Gastrocnemius medialis (tissue), 4 donors: ENCODE measurements at regions of chr10 and their contacts with region 1.

Region 1: GRCh38 chr10:71569775-71570588 is 149.6 kb downstream of the C10orf105 start:
- DNase-seq: peak; percentile 45 to 56
- ATAC-seq: peak; percentile 61 to 73
- H3K4me3 ChIP-seq: no peak overlapping the region
- H3K27ac ChIP-seq: no peak overlapping the region
- H3K4me1 ChIP-seq: peaks cover 0 to 1% of the 10 kb centered on the region in 2 donors
- H3K27me3 ChIP-seq: no peaks in the 10 kb centered on the region
- CTCF ChIP-seq: peak; percentile 75 to 89 (median 82)
- POLR2A ChIP-seq: no peak

Region 2: DNA sequence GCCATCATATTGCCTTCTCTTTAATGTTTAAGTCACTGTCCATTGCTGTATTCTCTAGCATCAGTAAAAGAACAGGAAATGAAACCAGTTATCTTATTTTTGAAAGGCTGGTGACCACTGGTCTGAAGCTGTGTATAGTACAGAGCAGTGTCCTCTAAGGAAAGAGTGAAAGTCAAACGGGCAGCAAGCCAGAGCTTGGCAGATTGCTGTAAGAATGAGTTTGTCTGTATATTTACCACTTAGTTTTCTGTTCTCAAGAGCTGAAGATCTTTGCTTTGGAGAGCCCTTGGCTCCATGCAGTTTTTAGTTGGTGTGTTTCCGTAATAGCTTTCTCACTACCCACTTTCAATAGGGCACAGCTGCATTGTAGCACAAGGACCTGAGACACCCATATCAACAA is 713.5 kb before region 1 on chr10:
- in situ Hi-C with region 1: no loop called
- intact Hi-C with region 1: no loop called
- DNase-seq: no peak
- ATAC-seq: no peak
- H3K4me3 ChIP-seq: no peak overlapping the region
- H3K27ac ChIP-seq: no peak overlapping the region
- H3K4me1 ChIP-seq: no peaks in the 10 kb centered on the region
- H3K27me3 ChIP-seq: no peaks in the 10 kb centered on the region
- CTCF ChIP-seq: no peak
- POLR2A ChIP-seq: no peak

Region 3: GRCh38 chr10:71314028-71314693 is 255.8 kb before region 1 on chr10:
- in situ Hi-C with region 1: loop called (anchors 5 to 25 kb)
- intact Hi-C with region 1: loop called (anchors 1 kb)
- DNase-seq: peak in 1 of 2 donors; percentile 35
- ATAC-seq: peak; percentile 54 to 62
- H3K4me3 ChIP-seq: peak overlapping the region in 1 of 4 donors; percentile 25
- H3K27ac ChIP-seq: peak overlapping the region in 2 of 4 donors; percentile 18 to 59
- H3K4me1 ChIP-seq: peaks cover 11% of the 10 kb centered on the region in 2 donors
- H3K27me3 ChIP-seq: no peaks in the 10 kb centered on the region
- CTCF ChIP-seq: peak; percentile 39 to 96 (median 83)
- POLR2A ChIP-seq: no peak

Region 4: DNA sequence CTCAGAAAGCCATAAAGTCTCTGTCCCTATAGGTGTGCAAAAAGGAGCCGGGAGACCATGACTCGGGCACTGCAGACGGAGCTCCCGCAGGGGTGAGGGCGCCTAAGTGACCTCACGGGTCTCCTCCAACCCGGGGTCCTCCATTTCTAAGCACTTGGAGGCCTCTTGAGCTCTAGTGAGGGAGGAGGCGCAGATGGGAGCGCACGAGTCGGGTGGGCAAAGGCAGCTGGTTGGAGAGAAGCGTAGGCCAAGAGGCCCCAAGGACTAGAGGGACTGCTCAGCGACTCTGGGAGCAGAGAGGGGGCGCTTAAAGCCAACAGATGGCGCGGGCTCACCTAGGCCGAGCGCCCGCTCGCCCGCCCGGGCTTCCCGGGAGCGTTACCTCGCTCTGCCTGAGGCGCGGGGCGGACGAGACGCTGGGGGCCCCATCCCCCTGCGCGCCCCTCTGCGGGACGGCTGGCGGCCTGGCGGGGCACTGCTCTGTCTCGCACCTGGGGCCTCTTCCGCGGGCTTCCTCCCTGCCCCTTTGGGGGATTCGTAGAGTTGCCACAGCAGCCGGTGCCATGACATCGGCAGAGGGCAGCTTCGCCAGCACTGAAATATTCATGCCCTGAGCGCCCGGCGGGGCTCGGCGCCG is 173.8 kb before region 1 on chr10:
- in situ Hi-C with region 1: loop called in 2 of 4 experiments (anchors 5 to 10 kb)
- intact Hi-C with region 1: loop called (anchors 1 kb)
- DNase-seq: peak; percentile 36 to 43
- ATAC-seq: peak; percentile 71 to 76
- H3K4me3 ChIP-seq: peak overlapping the region; percentile 45 to 69 (median 57)
- H3K27ac ChIP-seq: peak overlapping the region in 1 of 4 donors; percentile 40
- H3K4me1 ChIP-seq: peaks cover 7 to 10% of the 10 kb centered on the region in 2 donors
- H3K27me3 ChIP-seq: peaks cover 23 to 41% (median 38%) of the 10 kb centered on the region in 3 donors
- CTCF ChIP-seq: peak; percentile 52 to 70 (median 55)
- POLR2A ChIP-seq: no peak

Region 5: GRCh38 chr10:71404503-71405295 is 165.3 kb before region 1 on chr10:
- in situ Hi-C with region 1: loop called in 2 of 4 experiments (anchors 5 to 10 kb)
- intact Hi-C with region 1: no loop called
- DNase-seq: no peak
- ATAC-seq: no peak
- H3K4me3 ChIP-seq: no peak overlapping the region
- H3K27ac ChIP-seq: no peak overlapping the region
- H3K4me1 ChIP-seq: no peaks in the 10 kb centered on the region
- H3K27me3 ChIP-seq: peaks cover 5 to 18% (median 17%) of the 10 kb centered on the region in 3 donors
- CTCF ChIP-seq: no peak
- POLR2A ChIP-seq: no peak

Region 6: DNA sequence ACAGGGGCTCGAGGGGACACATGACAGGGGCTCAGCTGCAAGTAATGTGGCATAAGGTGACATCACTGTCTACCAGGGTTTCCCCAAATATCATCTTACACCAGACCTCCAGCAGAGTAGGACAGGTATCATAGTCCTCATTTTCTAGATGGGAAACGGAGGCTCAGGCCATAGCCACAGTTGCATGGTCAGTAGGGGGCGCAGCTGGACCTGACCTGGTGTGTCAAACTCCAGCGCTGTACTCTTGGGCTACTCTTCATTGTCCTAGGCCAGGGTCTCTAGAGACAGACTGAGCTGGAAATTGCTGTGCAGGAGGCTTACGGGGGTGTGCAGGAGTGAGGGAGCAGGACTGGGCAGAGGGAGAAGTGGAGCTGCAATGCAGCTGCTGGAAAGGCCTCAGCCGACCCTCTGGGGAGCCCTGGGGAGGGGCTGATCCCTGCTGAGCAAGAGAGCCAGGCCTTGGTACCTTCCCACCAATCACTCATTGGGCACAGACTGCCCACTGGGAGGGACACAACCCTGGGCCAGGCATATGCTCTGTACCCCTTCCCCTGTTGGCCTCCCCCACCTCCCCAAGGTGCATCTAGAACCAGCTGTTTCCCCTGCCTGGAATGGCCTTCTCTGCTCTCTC is 83.4 kb before region 1 on chr10:
- in situ Hi-C with region 1: no loop called
- intact Hi-C with region 1: loop called (anchors 1 kb)
- DNase-seq: no peak
- ATAC-seq: peak in 1 of 2 donors; percentile 33
- H3K4me3 ChIP-seq: no peak overlapping the region
- H3K27ac ChIP-seq: no peak overlapping the region
- H3K4me1 ChIP-seq: no peaks in the 10 kb centered on the region
- H3K27me3 ChIP-seq: no peaks in the 10 kb centered on the region
- CTCF ChIP-seq: peak in 3 of 5 experiments; percentile 32 to 37 (median 37)
- POLR2A ChIP-seq: no peak